K562 (cell line): ENCODE measurements at regions of chr18 and their contacts with region 1.

Region 1: DNA sequence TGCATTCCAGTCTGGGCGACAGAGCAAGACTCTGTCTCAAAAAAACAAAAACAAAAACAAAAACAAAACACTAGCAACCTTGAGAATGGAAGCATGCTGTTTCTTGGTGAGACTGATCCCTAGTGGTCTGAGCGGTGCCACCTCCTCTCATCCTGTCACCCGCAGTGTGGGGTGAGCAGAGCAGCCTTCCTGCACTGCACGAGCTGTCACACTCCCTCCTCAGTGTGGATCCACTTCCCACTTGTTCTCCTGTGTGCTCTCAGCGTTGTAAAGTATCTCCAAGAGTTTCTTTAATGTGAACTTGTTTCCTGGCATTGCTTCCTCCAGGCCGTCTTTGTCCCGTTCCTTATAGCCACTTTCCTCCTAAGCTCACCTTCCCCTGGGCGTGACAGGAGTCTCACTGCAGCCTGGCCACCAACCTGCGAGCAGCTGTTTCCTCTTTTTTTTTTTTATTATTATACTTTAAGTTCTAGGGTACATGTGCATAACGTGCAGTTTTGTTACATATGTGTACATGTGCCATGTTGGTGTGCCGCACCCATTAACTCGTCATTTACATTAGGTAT is 220.5 kb downstream of the FAM210A start:
- DNase-seq: no peak
- ATAC-seq: no peak
- H3K4me3 ChIP-seq: no peak overlapping the region
- H3K27ac ChIP-seq: no peak overlapping the region
- H3K4me1 ChIP-seq: no peaks in the 10 kb centered on the region
- H3K27me3 ChIP-seq: peaks cover 10 to 18% of the 10 kb centered on the region in 2 experiments
- CTCF ChIP-seq: no peak
- EP300 ChIP-seq: no peak
- POLR2A ChIP-seq: no peak
- RAD21 ChIP-seq: no peak

Region 2: DNA sequence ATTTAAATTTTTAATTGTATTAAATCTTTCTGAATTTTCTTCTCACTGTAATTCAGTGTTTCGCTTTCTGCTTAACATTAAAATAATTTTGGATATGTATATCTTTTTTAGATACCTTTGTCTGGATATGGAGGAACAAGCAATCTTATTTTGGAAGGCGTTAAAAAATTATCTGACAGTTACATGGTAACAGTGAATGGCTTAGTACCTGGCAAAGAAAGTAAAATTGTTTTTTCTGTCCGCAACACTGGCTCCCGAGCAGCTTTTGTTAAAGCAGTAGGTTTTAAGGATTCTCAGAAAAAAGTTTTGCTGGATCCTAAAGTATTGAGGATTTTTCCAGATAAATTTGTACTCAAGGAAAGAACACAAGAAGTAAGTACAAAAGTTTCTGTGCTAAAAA is 419.0 kb before region 1 on chr18:
- CTCF ChIA-PET with region 1: no interaction called
- POLR2A ChIA-PET with region 1: no interaction called
- in situ Hi-C with region 1: no loop called
- intact Hi-C with region 1: no loop called
- DNase-seq: no peak
- ATAC-seq: no peak
- H3K4me3 ChIP-seq: no peak overlapping the region
- H3K27ac ChIP-seq: no peak overlapping the region
- H3K4me1 ChIP-seq: no peaks in the 10 kb centered on the region
- H3K27me3 ChIP-seq: no peaks in the 10 kb centered on the region
- CTCF ChIP-seq: no peak
- EP300 ChIP-seq: no peak
- POLR2A ChIP-seq: no peak
- RAD21 ChIP-seq: no peak

Region 3: GRCh38 chr18:13471971-13472628 is 33.8 kb before region 1 on chr18:
- CTCF ChIA-PET with region 1: no interaction called
- POLR2A ChIA-PET with region 1: no interaction called
- in situ Hi-C with region 1: loop called (anchors 5 kb)
- intact Hi-C with region 1: no loop called
- DNase-seq: no peak
- ATAC-seq: no peak
- H3K4me3 ChIP-seq: no peak overlapping the region
- H3K27ac ChIP-seq: no peak overlapping the region
- H3K4me1 ChIP-seq: no peaks in the 10 kb centered on the region
- H3K27me3 ChIP-seq: peaks cover 2 to 26% of the 10 kb centered on the region in 2 experiments; a peak in 2 of 5 replicates
- CTCF ChIP-seq: no peak
- EP300 ChIP-seq: no peak
- POLR2A ChIP-seq: no peak
- RAD21 ChIP-seq: no peak